ENCODE measurements at regions of chr10 and their contacts with region 1.

Region 1: DNA sequence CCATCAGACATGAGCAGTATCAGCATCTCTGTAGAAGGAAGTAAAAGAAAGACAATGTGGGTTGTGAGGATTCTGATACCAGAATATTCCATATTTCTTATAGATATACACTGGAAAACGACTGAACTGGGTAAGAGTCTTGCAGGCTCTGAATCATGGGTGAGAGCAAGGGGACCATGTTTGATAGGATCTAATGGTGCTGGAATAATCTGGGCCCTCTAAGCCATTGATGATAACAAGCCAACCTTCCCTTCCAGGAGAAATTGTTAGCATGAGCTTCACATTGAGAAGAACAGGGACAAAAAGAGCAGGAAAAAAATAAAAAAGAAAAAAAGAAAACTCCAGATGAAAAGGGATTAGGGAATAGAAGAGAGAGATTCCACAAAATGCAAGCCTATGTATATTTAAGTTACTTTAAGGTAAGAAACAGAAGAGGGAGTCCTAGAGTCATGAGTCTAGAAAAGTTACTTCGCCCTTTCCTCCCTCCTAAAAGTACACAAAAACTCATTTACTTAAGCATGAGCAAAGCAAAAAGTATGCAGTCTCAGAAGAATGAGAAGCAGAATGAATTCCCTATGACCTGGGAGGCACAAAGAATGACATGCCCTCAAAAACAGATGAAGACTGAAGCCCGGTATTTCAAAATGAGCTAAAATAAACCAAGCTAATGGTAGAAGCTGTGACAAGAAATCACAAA is 181.9 kb downstream of the TMEM26 start:
- DNase-seq: no peak
- H3K4me3 ChIP-seq: no peak overlapping the region
- H3K27ac ChIP-seq: no peak overlapping the region
- H3K4me1 ChIP-seq: no peaks in the 10 kb centered on the region
- H3K27me3 ChIP-seq: no peaks in the 10 kb centered on the region; a peak in 1 of 7 replicates
- CTCF ChIP-seq: peak in 1 of 3 experiments; percentile 11; a peak in 2 of 4 replicates
- EP300 ChIP-seq: no peak
- POLR2A ChIP-seq: no peak
- RAD21 ChIP-seq: peak in 1 of 2 experiments; percentile 44

Region 2: DNA sequence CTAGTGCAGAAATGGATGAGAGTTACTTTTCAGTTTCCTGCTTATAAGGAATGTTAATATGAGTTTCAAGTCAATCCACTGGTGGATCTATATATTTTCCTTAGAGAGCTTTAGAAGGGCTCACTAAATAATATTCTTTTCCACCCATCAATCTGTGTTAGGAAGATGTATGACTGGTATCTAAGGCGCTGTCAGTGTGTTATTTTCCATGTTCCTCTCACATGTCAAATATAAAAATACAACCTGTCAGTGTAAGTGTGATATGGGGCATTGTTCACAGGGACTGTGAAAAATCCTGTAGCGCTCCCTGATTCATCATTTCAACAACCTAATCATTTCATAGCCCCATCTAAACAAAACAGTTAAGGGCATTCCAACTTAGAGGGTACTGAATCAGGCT is 21.1 kb before region 1 on chr10:
- CTCF ChIA-PET with region 1: no interaction called
- POLR2A ChIA-PET with region 1: no interaction called
- DNase-seq: no peak
- H3K4me3 ChIP-seq: no peak overlapping the region
- H3K27ac ChIP-seq: no peak overlapping the region
- H3K4me1 ChIP-seq: no peaks in the 10 kb centered on the region
- H3K27me3 ChIP-seq: peaks cover 0 to 1% (median 0%) of the 10 kb centered on the region in 4 experiments; a peak in 1 of 7 replicates
- CTCF ChIP-seq: no peak
- EP300 ChIP-seq: no peak
- POLR2A ChIP-seq: no peak
- RAD21 ChIP-seq: no peak

Region 3: DNA sequence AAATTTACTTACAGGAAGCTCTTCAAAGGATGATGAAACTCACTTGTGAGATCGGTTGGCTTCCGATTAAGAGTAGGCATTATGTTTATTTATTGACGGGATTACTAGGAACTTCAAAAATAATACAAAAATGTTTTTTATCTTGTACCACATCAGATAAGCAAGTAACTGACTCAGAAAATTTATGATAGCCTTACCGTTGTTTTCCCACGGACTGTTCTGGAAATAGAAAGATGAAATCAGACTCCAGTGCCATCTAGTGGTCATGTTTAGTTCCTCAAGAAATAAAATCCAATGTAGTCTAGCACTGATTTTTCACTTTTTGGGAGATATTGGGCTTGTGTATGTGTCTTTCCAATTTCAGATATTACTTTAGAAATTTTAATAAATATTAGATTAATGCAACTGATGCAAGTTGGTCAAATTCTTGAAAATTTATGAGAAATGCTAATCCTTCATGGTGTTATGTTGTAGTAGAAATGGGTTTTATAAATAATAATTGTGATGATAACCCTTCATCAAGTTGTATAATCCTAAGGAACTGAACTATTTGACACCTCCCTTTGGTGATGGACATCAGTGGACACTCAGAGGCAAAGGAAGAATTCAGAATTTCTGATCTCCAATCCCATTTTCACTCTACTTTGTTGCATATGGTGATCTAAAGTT is 13.1 kb after region 1 on chr10:
- CTCF ChIA-PET with region 1: interaction called, 10 read pairs
- POLR2A ChIA-PET with region 1: no interaction called
- DNase-seq: no peak
- H3K4me3 ChIP-seq: no peak overlapping the region
- H3K27ac ChIP-seq: no peak overlapping the region
- H3K4me1 ChIP-seq: no peaks in the 10 kb centered on the region
- H3K27me3 ChIP-seq: no peaks in the 10 kb centered on the region
- CTCF ChIP-seq: peak in 2 of 3 experiments; percentile 34 to 57; a peak in 2 of 4 replicates
- EP300 ChIP-seq: no peak
- POLR2A ChIP-seq: no peak
- RAD21 ChIP-seq: peak; percentile 65 to 71